Colonic mucosa (tissue), 4 donors: ENCODE measurements at regions of chr1 and their contacts with region 1.

Region 1: DNA sequence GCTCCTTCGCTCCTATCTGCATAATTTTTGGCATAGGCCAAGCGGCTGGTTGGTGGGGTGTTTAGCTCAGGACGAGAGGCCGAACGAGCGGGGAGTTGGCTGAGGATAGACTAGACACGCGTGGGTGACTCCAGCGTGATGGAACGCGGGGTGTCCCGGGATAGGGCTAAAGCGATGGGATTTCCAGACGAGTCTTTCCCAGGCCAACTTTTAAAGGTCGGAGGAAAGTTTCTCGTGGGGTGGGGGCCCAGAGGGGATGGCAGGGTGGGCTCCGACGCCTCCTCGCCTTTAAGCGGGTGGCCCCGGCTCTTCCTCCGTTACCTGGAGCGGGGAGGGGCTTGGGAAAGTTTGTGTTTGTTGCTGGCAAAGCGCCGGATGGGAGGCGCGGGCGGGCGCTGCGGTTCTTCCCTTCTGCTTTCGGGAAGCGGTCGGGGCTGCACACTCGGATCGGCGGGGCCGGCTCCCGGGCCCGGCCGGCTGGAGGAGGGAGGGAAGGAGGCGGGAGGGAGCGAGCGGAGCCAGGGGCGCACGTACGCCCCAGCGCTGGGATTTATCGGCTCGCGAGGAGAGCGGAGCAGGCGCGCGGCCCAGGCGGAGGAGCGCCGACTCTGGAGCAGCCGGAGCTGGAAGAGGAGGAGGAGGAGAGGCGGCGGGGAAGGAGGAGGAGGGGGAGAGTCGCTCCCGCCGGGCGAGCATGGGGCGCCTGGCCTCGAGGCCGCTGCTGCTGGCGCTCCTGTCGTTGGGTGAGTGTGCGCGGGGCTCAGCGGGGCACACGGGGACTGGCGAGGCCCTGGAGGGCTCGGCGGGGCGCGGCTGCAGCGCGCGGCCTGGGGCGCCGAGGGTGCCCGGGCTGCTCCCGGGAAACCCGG is at the start of gene PTGFRN:
- DNase-seq: peak; percentile 81
- H3K4me3 ChIP-seq: peak within 1 kb of the TSS; percentile 66
- H3K27ac ChIP-seq: peak within 1 kb of the TSS; percentile 87
- H3K4me1 ChIP-seq: peaks cover 6% of the 10 kb centered on the region
- H3K27me3 ChIP-seq: no peaks in the 10 kb centered on the region
- CTCF ChIP-seq: no peak
- total RNA-seq, gene PTGFRN: 94.9 TPM

Region 2: DNA sequence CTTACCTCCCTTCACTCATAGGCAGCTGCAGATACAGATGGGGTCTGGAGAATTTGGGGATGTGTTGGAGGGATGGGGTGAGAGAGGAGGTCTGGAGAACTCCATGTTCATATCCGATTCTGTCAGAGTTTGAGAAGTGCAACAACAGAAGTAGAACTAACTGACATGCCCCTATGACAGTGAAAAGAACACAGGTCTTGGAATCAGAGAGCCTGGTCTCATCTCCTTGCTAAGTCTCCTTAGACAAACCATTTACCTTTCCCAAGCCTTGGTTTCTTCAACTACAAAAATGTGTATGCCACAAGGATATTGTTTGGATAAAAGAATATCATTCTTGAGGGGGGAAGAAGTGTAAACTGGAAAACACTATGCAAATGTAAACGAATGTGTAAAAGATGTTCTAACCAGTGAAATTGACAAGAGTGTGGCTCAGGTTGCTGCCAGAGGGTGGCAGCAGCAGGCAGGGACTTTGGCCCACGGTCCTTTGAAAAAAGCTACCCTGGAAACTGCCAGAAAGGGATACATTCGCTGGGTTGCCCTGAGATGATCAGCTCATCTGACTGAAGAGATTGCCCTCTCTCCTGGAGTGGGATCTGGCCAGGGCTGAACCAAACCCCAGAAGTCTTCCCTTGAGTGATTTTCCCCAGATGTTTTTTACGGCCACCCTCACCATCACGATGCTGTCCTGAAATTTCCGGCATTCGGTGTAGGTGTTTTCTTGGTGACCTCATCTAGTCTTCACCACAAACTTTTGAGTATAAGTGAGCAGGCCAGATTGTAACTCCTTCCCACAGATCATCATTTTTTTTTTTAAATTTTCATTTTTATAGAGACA is 172.5 kb before region 1 on chr1:
- intact Hi-C with region 1: loop called (anchors 10 kb)
- DNase-seq: peak; percentile 57
- H3K4me3 ChIP-seq: no peak overlapping the region
- H3K27ac ChIP-seq: peak overlapping the region; percentile 42
- H3K4me1 ChIP-seq: no peaks in the 10 kb centered on the region
- H3K27me3 ChIP-seq: no peaks in the 10 kb centered on the region
- CTCF ChIP-seq: peak; percentile 64

Region 3: DNA sequence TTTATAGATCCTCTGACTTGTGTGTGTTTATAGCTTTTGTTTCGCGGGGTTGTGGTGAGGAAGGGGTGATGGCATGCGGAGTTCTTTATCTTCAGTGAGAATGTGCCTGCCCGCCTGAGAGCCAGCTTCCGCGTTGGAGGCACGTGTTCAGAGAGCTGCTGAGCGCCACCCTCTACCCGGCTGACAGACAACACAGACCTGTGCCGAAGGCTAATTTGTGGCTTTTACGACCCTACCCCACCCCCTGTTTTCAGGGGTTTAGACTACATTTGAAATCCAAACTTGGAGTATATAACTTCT is 77.5 kb after region 1 on chr1:
- intact Hi-C with region 1: loop called (anchors 10 kb)
- DNase-seq: peak; percentile 62
- H3K4me3 ChIP-seq: no peak overlapping the region
- H3K27ac ChIP-seq: no peak overlapping the region
- H3K4me1 ChIP-seq: peaks cover 7% of the 10 kb centered on the region
- H3K27me3 ChIP-seq: no peaks in the 10 kb centered on the region
- CTCF ChIP-seq: no peak